ENCODE measurements at regions of chr5 and their contacts with region 1.

Region 1: GRCh38 chr5:55994574-55995333 is at the start of gene IL6ST:
- DNase-seq: peak; percentile 97
- H3K4me3 Mint-ChIP-seq: peak within 1 kb of the TSS; percentile 100
- H3K27ac Mint-ChIP-seq: peak within 1 kb of the TSS; percentile 100
- H3K4me1 Mint-ChIP-seq: peaks cover 53% of the 10 kb centered on the region
- H3K27me3 Mint-ChIP-seq: no peaks in the 10 kb centered on the region
- total RNA-seq, gene IL6ST: 93.4 to 103 TPM

Region 2: GRCh38 chr5:56026863-56027300 is 32.1 kb after region 1 on chr5:
- CTCF ChIA-PET with region 1: no interaction called
- intact Hi-C with region 1: loop called (anchors 1 kb)
- DNase-seq: peak; percentile 42
- H3K4me3 Mint-ChIP-seq: no peak overlapping the region
- H3K27ac Mint-ChIP-seq: no peak overlapping the region
- H3K4me1 Mint-ChIP-seq: peaks cover 30% of the 10 kb centered on the region
- H3K27me3 Mint-ChIP-seq: no peaks in the 10 kb centered on the region

Region 3: GRCh38 chr5:56064984-56065383 is 70.2 kb after region 1 on chr5:
- CTCF ChIA-PET with region 1: interaction called, 3 read pairs
- intact Hi-C with region 1: loop called (anchors 1 kb)
- DNase-seq: peak; percentile 52
- H3K4me3 Mint-ChIP-seq: peak overlapping the region; percentile 10
- H3K27ac Mint-ChIP-seq: peak overlapping the region; percentile 70
- H3K4me1 Mint-ChIP-seq: peaks cover 75% of the 10 kb centered on the region
- H3K27me3 Mint-ChIP-seq: no peaks in the 10 kb centered on the region

Region 4: DNA sequence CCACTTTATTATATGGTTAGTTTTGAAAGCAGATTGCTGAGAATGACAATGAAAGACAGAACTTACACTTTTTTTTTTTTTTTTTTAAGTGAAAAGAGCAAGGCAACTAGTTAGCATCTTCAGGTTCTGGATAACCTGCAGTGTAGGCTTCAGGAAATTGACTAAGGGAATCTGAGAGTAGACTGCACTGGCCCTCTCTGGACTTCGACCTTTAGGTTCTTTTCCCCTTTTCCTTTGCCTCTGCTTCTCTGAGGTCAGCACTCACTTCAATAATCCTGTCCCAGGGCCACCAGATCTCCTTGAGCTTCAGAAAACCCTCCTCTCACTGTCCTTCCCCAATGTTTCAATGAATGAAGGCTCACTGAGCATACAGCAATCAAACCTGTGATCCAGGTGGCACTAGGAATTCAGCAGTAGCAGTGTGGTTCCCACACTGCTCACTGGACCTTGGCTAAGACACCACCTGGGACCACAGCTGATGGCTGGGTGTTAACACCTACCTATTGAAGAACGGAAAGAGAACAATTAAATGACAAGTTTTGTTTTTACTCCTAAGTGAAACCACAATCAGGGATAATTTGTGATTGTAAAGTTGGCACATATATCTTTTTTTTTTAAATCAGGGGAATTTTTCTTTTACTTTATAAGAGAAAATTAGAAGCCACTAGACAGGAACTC is 85.8 kb after region 1 on chr5:
- CTCF ChIA-PET with region 1: interaction called, 6 read pairs
- intact Hi-C with region 1: loop called (anchors 1 kb)
- DNase-seq: peak; percentile 72
- H3K4me3 Mint-ChIP-seq: peak overlapping the region; percentile 5
- H3K27ac Mint-ChIP-seq: peak overlapping the region; percentile 90
- H3K4me1 Mint-ChIP-seq: peaks cover 72% of the 10 kb centered on the region
- H3K27me3 Mint-ChIP-seq: no peaks in the 10 kb centered on the region

Region 5: DNA sequence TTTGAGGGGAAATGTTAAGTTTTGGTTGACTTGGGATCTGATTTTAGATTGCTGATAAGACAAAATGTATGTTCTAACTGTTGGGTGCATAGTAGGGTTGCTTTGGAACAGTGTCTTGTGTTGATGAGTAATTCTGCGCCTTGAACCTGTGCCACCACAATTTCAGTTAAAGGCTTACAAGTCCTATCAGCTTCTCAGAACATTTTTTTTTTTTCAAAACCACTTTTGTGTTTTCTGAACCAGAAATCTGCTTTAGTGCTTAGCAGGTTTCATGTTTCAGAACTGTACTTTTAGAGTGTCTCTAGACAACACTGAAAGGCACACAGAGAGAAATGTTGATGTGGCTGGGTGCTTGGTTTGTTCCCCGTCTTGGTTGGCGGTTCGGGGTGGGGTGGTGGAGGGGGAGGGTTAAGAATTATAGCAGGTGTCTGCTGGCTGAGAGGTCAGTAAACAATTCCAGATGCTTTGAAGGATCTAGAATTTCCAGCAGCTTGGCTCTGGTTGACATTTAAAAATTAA is 153.8 kb after region 1 on chr5:
- CTCF ChIA-PET with region 1: interaction called, 3 read pairs
- intact Hi-C with region 1: loop called (anchors 2 kb)
- DNase-seq: peak; percentile 80
- H3K4me3 Mint-ChIP-seq: peak overlapping the region; percentile 53
- H3K27ac Mint-ChIP-seq: peak overlapping the region; percentile 93
- H3K4me1 Mint-ChIP-seq: peaks cover 68% of the 10 kb centered on the region
- H3K27me3 Mint-ChIP-seq: no peaks in the 10 kb centered on the region

Measured in activated naive CD4-positive, alpha-beta T cell treated with anti-CD3 and anti-CD28 coated beads for 36 hours (primary cell).